ENCODE measurements at regions of chr1 and their contacts with region 1.

Region 1: DNA sequence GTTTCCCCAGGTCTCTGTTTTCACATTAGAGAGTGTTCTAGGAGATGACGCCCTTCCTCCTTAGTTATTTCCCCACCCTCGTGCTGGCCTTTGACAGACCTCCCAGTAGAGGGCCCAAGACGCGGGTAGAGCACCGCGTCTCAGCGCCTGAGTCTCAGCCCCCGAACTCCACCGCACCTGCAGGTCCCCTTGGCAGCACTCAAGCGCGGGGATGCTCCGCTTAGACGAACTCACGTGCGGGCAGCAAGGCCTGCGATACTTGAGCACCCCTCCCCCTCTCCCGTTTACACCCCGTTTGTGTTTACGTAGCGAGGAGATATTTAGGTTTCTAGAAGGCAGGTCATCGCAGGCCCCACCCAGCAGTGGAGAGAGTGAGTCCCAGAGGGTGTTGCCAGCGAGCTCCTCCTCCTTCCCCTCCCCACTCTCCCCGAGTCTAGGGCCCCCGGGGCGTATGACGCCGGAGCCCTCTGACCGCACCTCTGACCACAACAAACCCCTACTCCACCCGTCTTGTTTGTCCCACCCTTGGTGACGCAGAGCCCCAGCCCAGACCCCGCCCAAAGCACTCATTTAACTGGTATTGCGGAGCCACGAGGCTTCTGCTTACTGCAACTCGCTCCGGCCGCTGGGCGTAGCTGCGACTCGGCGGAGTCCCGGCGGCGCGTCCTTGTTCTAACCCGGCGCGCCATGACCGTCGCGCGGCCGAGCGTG is at the start of gene CD55:
- DNase-seq: peak; percentile 97 to 100 (median 97)
- ATAC-seq: peak; percentile 95
- H3K4me3 ChIP-seq: peak within 1 kb of the TSS; percentile 91
- H3K27ac ChIP-seq: peak within 1 kb of the TSS; percentile 97
- H3K4me1 ChIP-seq: peaks cover 33 to 39% of the 10 kb centered on the region in 2 experiments
- H3K27me3 ChIP-seq: no peaks in the 10 kb centered on the region
- CTCF ChIP-seq: peak; percentile 60 to 74 (median 62)
- EP300 ChIP-seq: peak; percentile 66
- POLR2A ChIP-seq: peak; percentile 96
- RAD21 ChIP-seq: peak; percentile 38 to 45
- polyA plus RNA-seq, gene CD55: 17.7 to 29.4 TPM

Region 2: GRCh38 chr1:207025144-207025880 is 295.9 kb before region 1 on chr1:
- CTCF ChIA-PET with region 1: no interaction called
- POLR2A ChIA-PET with region 1: no interaction called
- in situ Hi-C with region 1: no loop called
- intact Hi-C with region 1: loop called (anchors 5 kb)
- DNase-seq: no peak
- ATAC-seq: peak; percentile 6
- H3K4me3 ChIP-seq: peak overlapping the region; percentile 15
- H3K27ac ChIP-seq: peak overlapping the region; percentile 100
- H3K4me1 ChIP-seq: peaks cover 49 to 85% of the 10 kb centered on the region in 2 experiments
- H3K27me3 ChIP-seq: no peaks in the 10 kb centered on the region
- CTCF ChIP-seq: 0 out of 6 replicates have a peak, but pooled peaks of 1 of the 3 experiments have one; percentile 4
- EP300 ChIP-seq: peak; percentile 2; the same call in 1 of the 2 replicates
- POLR2A ChIP-seq: no peak
- RAD21 ChIP-seq: no peak; a peak in 2 of 4 replicates

Region 3: GRCh38 chr1:207181838-207182237 is 139.4 kb before region 1 on chr1:
- CTCF ChIA-PET with region 1: no interaction called
- POLR2A ChIA-PET with region 1: no interaction called
- in situ Hi-C with region 1: no loop called
- intact Hi-C with region 1: loop called (anchors 1 kb)
- DNase-seq: peak in 1 of 4 experiments; percentile 28
- ATAC-seq: peak; percentile 41; the same call in 1 of the 3 replicates
- H3K4me3 ChIP-seq: no peak overlapping the region
- H3K27ac ChIP-seq: no peak overlapping the region
- H3K4me1 ChIP-seq: no peaks in the 10 kb centered on the region
- H3K27me3 ChIP-seq: no peaks in the 10 kb centered on the region
- CTCF ChIP-seq: peak in 2 of 3 experiments; percentile 29 to 66; a peak in 3 of 6 replicates
- EP300 ChIP-seq: no peak
- POLR2A ChIP-seq: no peak
- RAD21 ChIP-seq: peak; percentile 87 to 93

Region 4: DNA sequence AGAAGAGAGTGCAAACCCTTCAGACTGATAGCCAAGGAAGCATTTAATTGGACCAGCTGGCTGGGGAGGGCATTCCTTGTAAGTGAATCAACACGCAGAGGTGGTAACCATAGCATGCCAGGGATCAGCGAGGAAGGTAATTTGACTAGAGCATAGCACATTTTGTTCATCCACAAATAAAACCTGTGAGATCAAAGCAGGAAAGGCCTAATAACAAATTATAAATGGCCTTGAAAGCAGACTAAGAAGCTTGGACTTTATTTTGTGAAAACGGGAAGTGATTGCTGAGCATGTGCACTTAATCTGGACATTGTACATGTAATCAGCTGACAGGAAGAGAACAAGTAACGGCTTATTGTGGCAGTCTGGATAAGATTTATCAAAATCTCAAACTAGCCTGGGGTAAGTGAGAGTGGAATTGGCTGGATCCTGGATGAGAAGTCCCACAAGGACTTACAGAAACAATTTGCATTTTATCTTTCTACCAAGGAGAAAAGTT is 11.4 kb before region 1 on chr1:
- CTCF ChIA-PET with region 1: no interaction called
- POLR2A ChIA-PET with region 1: interaction called, 22 read pairs
- in situ Hi-C with region 1: no loop called
- intact Hi-C with region 1: no loop called
- DNase-seq: peak in 2 of 4 experiments; percentile 62 to 76
- ATAC-seq: peak; percentile 76
- H3K4me3 ChIP-seq: peak overlapping the region; percentile 2; the same call in 1 of the 2 replicates
- H3K27ac ChIP-seq: peak overlapping the region; percentile 81
- H3K4me1 ChIP-seq: peaks cover 17 to 46% of the 10 kb centered on the region in 2 experiments
- H3K27me3 ChIP-seq: no peaks in the 10 kb centered on the region
- CTCF ChIP-seq: no peak
- EP300 ChIP-seq: peak; percentile 98
- POLR2A ChIP-seq: no peak
- RAD21 ChIP-seq: no peak

Region 5: GRCh38 chr1:207404849-207405525 is 83.8 kb after region 1 on chr1:
- CTCF ChIA-PET with region 1: no interaction called
- POLR2A ChIA-PET with region 1: interaction called, 6 read pairs
- in situ Hi-C with region 1: no loop called
- intact Hi-C with region 1: loop called (anchors 1 kb)
- DNase-seq: peak; percentile 66 to 78 (median 68)
- ATAC-seq: peak; percentile 98
- H3K4me3 ChIP-seq: no peak overlapping the region
- H3K27ac ChIP-seq: no peak overlapping the region
- H3K4me1 ChIP-seq: peaks cover 0 to 7% of the 10 kb centered on the region in 2 experiments; a peak in 2 of 5 replicates
- H3K27me3 ChIP-seq: no peaks in the 10 kb centered on the region
- CTCF ChIP-seq: peak; percentile 71 to 86 (median 74)
- EP300 ChIP-seq: no peak
- POLR2A ChIP-seq: no peak
- RAD21 ChIP-seq: peak; percentile 95 to 99